Esophagus squamous epithelium (tissue), 5 donors: ENCODE measurements at regions of chr13 and their contacts with region 1.

Region 1: GRCh38 chr13:102724923-102725322 is 30.1 kb upstream of the METTL21C start:
- DNase-seq: no peak
- H3K4me3 ChIP-seq: no peak overlapping the region
- H3K27ac ChIP-seq: no peak overlapping the region
- H3K4me1 ChIP-seq: peaks cover 0 to 9% (median 0%) of the 10 kb centered on the region in 3 donors
- H3K27me3 ChIP-seq: peaks cover 0 to 4% (median 0%) of the 10 kb centered on the region in 4 donors
- CTCF ChIP-seq: peak in 5 of 6 experiments; percentile 33 to 75 (median 48)
- POLR2A ChIP-seq: no peak

Region 2: GRCh38 chr13:102580552-102581169 is 144.3 kb before region 1 on chr13:
- intact Hi-C with region 1: loop called (anchors 10 kb)
- DNase-seq: no peak
- H3K4me3 ChIP-seq: no peak overlapping the region
- H3K27ac ChIP-seq: no peak overlapping the region
- H3K4me1 ChIP-seq: no peaks in the 10 kb centered on the region
- H3K27me3 ChIP-seq: peaks cover 0 to 13% (median 0%) of the 10 kb centered on the region in 4 donors
- CTCF ChIP-seq: peak; percentile 50 to 76 (median 68)
- POLR2A ChIP-seq: no peak

Region 3: DNA sequence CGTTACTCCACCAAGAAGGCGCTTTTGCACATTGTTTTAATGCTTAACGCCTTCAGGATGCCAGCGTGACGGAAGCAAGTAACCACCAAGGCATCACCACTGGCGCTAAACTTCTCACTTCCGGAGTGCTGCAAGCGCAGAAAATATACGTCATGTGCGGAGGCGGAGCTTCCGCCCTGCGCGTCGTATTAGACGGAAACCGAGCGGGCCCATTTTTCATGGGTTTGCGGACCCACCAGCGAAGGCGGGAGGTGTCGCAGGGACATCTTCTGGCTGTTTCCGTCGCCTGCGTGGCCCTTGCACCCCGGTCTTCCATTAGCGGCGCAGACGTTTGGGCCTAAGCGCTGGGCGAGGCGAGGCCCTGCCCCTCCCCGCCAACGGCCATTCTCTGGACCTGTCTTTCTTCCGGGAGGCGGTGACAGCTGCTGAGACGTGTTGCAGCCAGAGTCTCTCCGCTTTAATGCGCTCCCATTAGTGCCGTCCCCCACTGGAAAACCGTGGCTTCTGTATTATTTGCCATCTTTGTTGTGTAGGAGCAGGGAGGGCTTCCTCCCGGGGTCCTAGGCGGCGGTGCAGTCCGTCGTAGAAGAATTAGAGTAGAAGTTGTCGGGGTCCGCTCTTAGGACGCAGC is 120.8 kb after region 1 on chr13 and contains the start of gene ERCC5:
- intact Hi-C with region 1: loop called (anchors 10 kb)
- DNase-seq: peak; percentile 66
- H3K4me3 ChIP-seq: peak within 1 kb of the TSS; percentile 88 to 99 (median 92)
- H3K27ac ChIP-seq: peak within 1 kb of the TSS; percentile 93 to 99 (median 96)
- H3K4me1 ChIP-seq: peaks cover 10 to 41% (median 10%) of the 10 kb centered on the region in 3 donors
- H3K27me3 ChIP-seq: no peaks in the 10 kb centered on the region
- CTCF ChIP-seq: peak in 4 of 6 experiments; percentile 9 to 37 (median 16)
- POLR2A ChIP-seq: peak in 3 of 4 donors; percentile 45 to 87 (median 77)
- total RNA-seq, gene ERCC5: 34.9 to 70.1 (median 48.3) TPM